ENCODE measurements at regions of chr6 and their contacts with region 1.

Region 1: GRCh38 chr6:41367700-41368099 is 32.3 kb downstream of the NCR2 start:
- DNase-seq: no peak
- H3K4me3 Mint-ChIP-seq: no peak overlapping the region
- H3K27ac Mint-ChIP-seq: no peak overlapping the region
- H3K4me1 Mint-ChIP-seq: peaks cover 16% of the 10 kb centered on the region
- H3K27me3 Mint-ChIP-seq: peaks cover 72% of the 10 kb centered on the region

Region 2: GRCh38 chr6:41488433-41489119 is 120.9 kb after region 1 on chr6:
- intact Hi-C with region 1: no loop called
- DNase-seq: no peak
- H3K4me3 Mint-ChIP-seq: no peak overlapping the region
- H3K27ac Mint-ChIP-seq: no peak overlapping the region
- H3K4me1 Mint-ChIP-seq: no peaks in the 10 kb centered on the region
- H3K27me3 Mint-ChIP-seq: peaks cover 45% of the 10 kb centered on the region

Region 3: DNA sequence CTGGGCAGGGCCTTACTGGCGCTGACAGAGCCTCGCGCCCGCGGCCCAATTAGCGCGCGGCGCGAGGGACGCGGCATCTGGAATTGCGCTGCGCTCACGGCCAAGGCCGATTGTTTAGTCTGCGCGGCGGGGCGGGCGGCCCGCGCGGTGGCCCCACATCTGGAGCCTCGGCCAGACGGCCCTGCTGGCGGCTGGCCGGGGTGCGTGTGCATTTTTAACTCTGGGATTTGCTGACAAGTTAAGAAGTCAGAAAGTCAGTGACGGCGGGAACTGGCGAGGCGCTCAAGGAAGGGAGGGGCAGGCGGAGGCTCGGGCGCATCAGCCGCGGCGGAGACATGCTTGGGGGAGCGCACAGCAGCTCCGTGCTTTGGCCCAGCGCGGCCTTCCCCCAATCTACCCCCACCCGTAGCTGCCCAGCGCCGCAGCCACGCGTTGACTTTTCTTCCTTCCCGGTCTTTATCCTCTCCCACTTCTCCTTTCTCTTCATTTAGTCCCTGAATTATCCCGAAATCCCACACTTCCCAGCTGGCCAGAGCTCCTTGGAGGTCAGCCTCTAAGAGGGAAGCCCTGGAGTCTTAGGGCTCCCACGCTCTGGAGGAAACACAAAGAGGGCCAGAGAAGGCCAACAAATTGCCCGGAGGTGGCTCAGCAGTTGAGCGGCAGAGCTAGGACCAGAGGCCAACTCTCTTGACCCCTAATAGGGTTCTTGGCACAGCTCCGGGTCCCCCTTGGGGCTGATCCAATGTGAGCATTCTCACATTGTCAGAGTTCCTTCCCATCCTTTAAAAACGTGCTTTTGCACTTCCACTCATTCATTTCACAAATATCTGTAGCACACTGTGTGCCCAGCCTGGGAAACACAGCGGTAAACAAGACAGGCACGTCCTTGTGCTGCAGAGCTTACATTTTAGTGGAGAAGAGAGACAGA is 137.7 kb after region 1 on chr6:
- intact Hi-C with region 1: loop called (anchors 5 kb)
- DNase-seq: peak; percentile 61
- H3K4me3 Mint-ChIP-seq: peak overlapping the region; percentile 31
- H3K27ac Mint-ChIP-seq: no peak overlapping the region
- H3K4me1 Mint-ChIP-seq: peaks cover 11% of the 10 kb centered on the region
- H3K27me3 Mint-ChIP-seq: peaks cover 73% of the 10 kb centered on the region

Region 4: GRCh38 chr6:41591859-41592502 is 224.3 kb after region 1 on chr6:
- intact Hi-C with region 1: loop called (anchors 1 kb)
- DNase-seq: peak; percentile 93
- H3K4me3 Mint-ChIP-seq: no peak overlapping the region
- H3K27ac Mint-ChIP-seq: no peak overlapping the region
- H3K4me1 Mint-ChIP-seq: peaks cover 2% of the 10 kb centered on the region
- H3K27me3 Mint-ChIP-seq: no peaks in the 10 kb centered on the region

Region 5: GRCh38 chr6:41683510-41684310 is 316.0 kb after region 1 on chr6:
- intact Hi-C with region 1: loop called (anchors 1 kb)
- DNase-seq: peak; percentile 94
- H3K4me3 Mint-ChIP-seq: peak overlapping the region; percentile 83
- H3K27ac Mint-ChIP-seq: peak overlapping the region; percentile 82
- H3K4me1 Mint-ChIP-seq: peaks cover 6% of the 10 kb centered on the region
- H3K27me3 Mint-ChIP-seq: peaks cover 3% of the 10 kb centered on the region

Region 6: GRCh38 chr6:41964201-41964887 is 596.6 kb after region 1 on chr6:
- intact Hi-C with region 1: no loop called
- DNase-seq: no peak
- H3K4me3 Mint-ChIP-seq: no peak overlapping the region
- H3K27ac Mint-ChIP-seq: peak overlapping the region; percentile 5
- H3K4me1 Mint-ChIP-seq: peaks cover 52% of the 10 kb centered on the region
- H3K27me3 Mint-ChIP-seq: no peaks in the 10 kb centered on the region

Measured in activated CD4-positive, alpha-beta T cell treated with anti-CD3 and anti-CD28 coated beads, Interleukin-2, amount 10 ng/mL, durations not matched to agents 24 days and 14 days (primary cell).